ENCODE measurements at regions of chr9 and their contacts with region 1.

Region 1: GRCh38 chr9:98807070-98807810 is at the start of gene GALNT12:
- H3K4me3 ChIP-seq: peak within 1 kb of the TSS; percentile 46
- H3K27ac ChIP-seq: peak within 1 kb of the TSS; percentile 9; the same call in 1 of the 2 replicates
- H3K4me1 ChIP-seq: no peaks in the 10 kb centered on the region
- CTCF ChIP-seq: no peak

Region 2: DNA sequence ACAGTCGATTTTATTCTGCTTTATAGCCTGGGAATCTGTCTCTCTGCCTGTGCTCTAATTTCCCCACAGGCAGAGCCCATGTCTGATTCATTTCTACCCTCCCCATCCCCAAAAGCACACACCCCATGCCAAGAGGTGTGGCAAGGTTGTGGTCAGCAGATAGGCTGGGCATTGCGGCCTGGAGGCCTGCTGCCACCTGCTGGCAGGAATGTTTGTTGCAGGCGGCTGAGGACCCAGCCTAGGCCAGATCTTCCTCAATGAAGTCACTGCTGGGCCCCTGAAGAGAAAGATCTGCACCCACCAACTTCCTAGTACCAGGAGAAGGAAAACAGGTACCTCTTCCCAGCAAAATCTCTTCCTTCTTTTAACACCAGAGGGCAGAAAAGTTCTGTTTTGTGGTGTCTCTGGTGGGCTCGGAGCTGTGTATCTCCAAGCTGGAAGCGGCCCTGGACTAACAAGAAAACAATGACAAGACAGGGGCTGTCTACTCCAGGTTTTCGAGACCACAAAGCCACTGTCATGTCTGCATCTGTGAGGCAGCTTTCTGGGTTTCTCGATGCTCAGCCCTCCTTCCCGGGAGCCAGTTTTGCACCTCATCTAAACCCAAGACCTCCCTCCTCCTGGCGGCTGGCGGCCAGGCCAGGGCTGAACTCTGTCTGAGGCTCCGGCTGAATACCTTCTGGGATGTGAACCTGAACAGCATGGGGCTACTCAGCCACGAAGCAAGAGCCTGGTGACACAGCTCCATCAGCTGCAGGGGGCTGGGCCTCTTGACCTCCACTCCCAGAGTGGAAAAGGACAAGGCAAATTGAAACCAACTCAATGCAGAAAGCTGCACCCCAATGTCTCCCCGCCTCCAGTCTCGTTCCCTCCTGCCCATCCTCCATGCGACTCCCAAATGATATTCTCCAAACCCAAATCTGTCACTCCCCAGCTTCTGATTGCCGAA is 15.8 kb before region 1 on chr9:
- CTCF ChIA-PET with region 1: interaction called, 15 read pairs
- POLR2A ChIA-PET with region 1: interaction called, 5 read pairs
- H3K4me3 ChIP-seq: no peak overlapping the region
- H3K27ac ChIP-seq: no peak overlapping the region
- H3K4me1 ChIP-seq: no peaks in the 10 kb centered on the region
- CTCF ChIP-seq: peak; percentile 78

Region 3: DNA sequence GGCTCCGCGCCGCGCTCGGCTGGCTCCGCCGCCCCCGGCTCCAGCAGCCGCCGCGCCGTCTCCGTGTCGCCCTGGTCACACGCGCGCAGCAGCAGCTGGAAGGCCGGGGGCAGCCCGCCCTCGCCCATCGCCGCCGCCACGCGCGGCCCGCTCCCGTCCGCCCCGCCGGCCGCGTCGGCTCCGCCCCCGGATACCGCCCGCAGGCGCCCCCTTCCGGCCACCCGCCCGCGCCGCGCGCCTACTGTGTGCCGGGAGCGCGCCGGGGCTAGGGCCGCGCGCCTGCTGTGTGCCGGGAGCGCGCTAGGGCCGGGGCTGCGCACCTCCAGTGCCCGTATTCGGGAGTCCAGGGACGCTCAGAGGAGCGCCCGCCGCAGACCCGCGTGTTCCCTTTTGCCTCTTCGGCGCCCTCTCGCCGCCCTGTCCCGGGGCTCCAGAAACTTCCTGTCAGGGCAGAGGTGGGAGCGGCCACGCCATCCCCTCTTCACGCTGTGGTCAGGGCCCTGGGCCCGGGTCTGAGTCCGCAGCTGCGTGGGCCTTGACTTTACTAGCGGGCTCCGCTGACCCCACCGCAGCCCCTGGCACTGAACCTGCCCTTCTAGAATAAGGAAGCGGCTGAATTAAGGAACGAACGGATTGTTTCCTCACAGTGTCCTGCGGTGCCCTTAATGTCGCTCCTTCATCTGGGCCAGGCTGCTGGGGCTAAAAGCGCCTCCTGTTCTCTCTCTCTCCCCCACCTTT is 10.7 kb before region 1 on chr9 and contains the start of gene ANKS6:
- CTCF ChIA-PET with region 1: interaction called, 15 read pairs
- POLR2A ChIA-PET with region 1: interaction called, 5 read pairs
- H3K4me3 ChIP-seq: peak within 1 kb of the TSS; percentile 73
- H3K27ac ChIP-seq: peak within 1 kb of the TSS; percentile 54; the same call in 1 of the 2 replicates
- H3K4me1 ChIP-seq: no peaks in the 10 kb centered on the region
- CTCF ChIP-seq: no peak

Region 4: DNA sequence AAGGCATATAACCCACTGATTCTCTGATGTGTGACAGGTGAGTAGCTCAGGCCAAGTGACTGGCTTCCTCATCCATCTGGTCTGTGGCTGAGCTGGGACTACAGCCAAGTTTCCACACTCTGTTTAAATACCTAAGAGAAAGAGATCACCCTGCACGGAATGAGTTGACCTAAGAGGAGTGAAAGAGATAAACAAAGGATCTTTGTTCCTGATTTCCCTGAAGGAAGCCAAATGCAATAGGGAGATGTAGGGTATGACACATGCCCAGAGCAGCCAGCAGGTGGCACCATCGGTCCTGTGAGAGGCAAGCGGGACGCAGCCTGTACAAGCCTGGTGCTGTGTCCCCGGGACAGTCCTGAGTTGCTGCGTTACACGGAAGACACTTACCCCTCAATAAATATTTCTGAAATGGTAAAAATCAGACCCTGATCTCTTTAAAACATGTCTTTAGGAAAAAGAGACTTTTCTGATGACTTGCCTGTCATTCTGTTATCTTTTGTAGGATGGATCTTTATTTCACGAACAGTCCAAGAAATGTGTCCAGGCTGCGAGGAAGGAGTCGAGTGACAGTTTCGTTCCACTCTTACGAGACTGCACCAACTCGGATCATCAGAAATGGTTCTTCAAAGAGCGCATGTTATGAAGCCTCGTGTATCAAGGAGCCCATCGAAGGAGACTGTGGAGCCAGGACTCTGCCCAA is 41.4 kb after region 1 on chr9:
- CTCF ChIA-PET with region 1: interaction called, 23 read pairs
- POLR2A ChIA-PET with region 1: no interaction called
- H3K4me3 ChIP-seq: no peak overlapping the region
- H3K27ac ChIP-seq: no peak overlapping the region
- H3K4me1 ChIP-seq: no peaks in the 10 kb centered on the region
- CTCF ChIP-seq: peak; percentile 69; the same call in 1 of the 2 replicates

Measured in HEK293 (cell line).